ENCODE measurements at regions of chr1 and their contacts with region 1.

Region 1: DNA sequence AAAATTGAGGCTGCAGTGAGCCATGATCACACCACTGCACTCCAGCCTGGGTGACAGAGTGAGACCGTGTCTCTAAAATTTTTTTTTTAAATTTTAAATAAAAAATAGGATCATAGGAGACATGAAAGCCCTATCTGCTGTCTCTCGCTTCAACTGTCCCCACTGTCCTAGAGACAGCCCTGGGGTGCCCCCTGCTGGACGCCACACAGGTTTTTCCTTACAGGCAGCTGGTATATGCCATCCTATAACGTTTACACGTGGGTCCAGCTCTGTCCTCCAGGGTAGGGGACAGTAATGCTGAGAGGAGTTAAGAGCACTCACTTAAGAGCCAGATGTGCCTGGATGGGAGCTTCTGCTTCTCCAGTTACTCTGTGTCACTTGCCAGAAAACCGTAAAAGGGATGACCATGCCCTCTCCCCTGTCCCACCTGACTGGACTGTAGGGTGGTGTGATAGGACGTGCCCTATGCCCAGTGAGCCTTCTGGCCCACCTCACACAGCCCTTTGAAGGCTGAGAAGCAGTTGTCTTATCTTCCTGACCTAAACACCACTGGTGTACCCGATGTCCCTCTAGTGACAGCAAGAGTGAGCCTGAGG is 8.5 kb downstream of the FBXO2 start:
- H3K4me3 ChIP-seq: no peak overlapping the region
- H3K27ac ChIP-seq: no peak overlapping the region
- H3K4me1 ChIP-seq: no peaks in the 10 kb centered on the region
- CTCF ChIP-seq: peak; percentile 57

Region 2: GRCh38 chr1:11012250-11013171 is 633.3 kb before region 1 on chr1 and contains the start of gene TARDBP:
- CTCF ChIA-PET with region 1: no interaction called
- POLR2A ChIA-PET with region 1: interaction called, 11 read pairs
- H3K4me3 ChIP-seq: peak within 1 kb of the TSS; percentile 100
- H3K27ac ChIP-seq: peak within 1 kb of the TSS; percentile 96
- H3K4me1 ChIP-seq: peaks cover 7% of the 10 kb centered on the region
- CTCF ChIP-seq: peak; percentile 38; the same call in 1 of the 2 replicates

Region 3: DNA sequence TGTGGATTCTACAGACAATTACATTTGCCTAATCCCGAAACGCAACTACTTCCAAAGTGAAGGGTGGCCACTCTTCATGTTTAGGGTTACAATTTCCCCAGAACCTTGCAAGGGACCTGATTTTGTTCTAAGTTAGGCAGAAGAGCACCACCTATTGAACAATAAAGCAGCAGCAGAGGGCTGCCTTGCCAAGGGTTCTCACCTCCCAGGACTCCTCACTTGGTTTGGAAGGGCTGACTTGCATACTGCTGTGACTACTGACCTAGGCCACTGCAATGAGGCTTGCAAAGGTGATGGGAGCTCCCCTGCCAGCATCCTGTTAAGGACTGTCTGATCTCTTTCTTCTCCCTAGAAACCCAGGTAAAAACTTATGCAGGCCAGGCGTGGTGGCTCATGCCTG is 397.6 kb before region 1 on chr1:
- CTCF ChIA-PET with region 1: interaction called, 35 read pairs
- POLR2A ChIA-PET with region 1: no interaction called
- H3K4me3 ChIP-seq: no peak overlapping the region
- H3K27ac ChIP-seq: no peak overlapping the region
- H3K4me1 ChIP-seq: no peaks in the 10 kb centered on the region
- CTCF ChIP-seq: no peak

Region 4: DNA sequence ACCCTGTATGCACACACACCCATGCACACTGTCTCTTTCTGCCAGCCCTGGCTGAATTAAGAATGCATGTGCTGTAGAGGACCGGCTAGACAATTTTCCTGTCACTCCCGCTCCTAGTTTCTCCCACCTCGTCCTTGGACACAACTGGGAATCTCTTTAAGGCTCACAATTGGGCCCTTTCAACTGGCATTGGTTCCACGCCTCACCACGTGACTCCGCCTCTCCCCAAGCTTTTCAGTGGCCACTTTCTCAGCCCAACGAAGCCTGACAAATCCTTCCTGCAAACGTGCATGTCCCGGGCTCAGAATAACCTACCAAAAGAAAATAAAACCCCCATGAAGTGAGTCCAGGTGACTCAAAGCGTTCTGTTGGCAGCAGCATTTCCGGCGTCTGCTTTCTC is 25.4 kb before region 1 on chr1:
- CTCF ChIA-PET with region 1: no interaction called
- POLR2A ChIA-PET with region 1: no interaction called
- H3K4me3 ChIP-seq: no peak overlapping the region
- H3K27ac ChIP-seq: no peak overlapping the region
- H3K4me1 ChIP-seq: no peaks in the 10 kb centered on the region
- CTCF ChIP-seq: no peak

Region 5: GRCh38 chr1:11634365-11635192 is 11.2 kb before region 1 on chr1:
- CTCF ChIA-PET with region 1: interaction called, 23 read pairs
- POLR2A ChIA-PET with region 1: no interaction called
- H3K4me3 ChIP-seq: no peak overlapping the region
- H3K27ac ChIP-seq: no peak overlapping the region
- H3K4me1 ChIP-seq: no peaks in the 10 kb centered on the region
- CTCF ChIP-seq: no peak

Region 6: GRCh38 chr1:11707621-11708276 is 62.0 kb after region 1 on chr1:
- CTCF ChIA-PET with region 1: interaction called, 19 read pairs
- POLR2A ChIA-PET with region 1: no interaction called
- H3K4me3 ChIP-seq: no peak overlapping the region
- H3K27ac ChIP-seq: no peak overlapping the region; the same call in 1 of the 2 replicates
- H3K4me1 ChIP-seq: peaks cover 4% of the 10 kb centered on the region; the same call in 1 of the 2 replicates
- CTCF ChIP-seq: peak; percentile 74

Region 7: GRCh38 chr1:11979851-11980675 is 334.3 kb after region 1 on chr1 and contains the start of gene MFN2:
- CTCF ChIA-PET with region 1: no interaction called
- POLR2A ChIA-PET with region 1: no interaction called
- H3K4me3 ChIP-seq: peak within 1 kb of the TSS; percentile 97
- H3K27ac ChIP-seq: peak within 1 kb of the TSS; percentile 67
- H3K4me1 ChIP-seq: 0 out of 2 replicates have a peak, but pooled peaks cover 4% of the 10 kb centered on the region
- CTCF ChIP-seq: no peak

Measured in HEK293 (cell line).